Tibial artery (tissue), 4 donors: ENCODE measurements at regions of chr3 and their contacts with region 1.

Region 1: DNA sequence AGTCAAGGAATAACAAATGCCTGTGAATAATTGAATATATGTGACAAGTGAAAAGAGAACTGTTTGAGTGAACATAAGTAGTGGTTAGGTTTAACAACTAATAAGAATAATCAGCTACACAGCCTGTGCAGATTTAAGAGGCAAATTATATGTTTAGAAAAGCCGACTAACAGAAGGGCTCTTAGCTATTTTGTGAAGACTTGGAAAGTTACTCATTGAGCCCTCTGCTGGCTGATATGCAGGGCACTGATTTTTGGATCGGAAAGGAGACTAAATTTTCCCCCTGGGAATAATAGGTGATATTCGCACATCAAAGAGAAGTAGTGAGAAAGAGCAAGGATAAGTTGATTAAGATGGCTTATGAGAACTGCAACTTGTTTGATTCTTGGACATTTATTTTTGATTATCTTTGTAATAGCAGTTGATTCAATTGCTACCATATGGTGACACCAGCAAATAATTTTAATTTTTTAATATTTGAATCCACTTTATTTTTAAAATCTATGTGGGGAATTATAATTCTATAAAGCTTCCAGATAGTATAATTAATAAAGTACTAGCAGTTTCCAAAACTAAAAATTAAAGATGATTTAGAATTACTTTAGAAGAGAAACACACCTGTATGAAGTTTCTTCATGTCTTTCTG is 156.2 kb downstream of the NLGN1 start:
- DNase-seq: no peak
- H3K4me3 ChIP-seq: no peak overlapping the region
- H3K27ac ChIP-seq: peak overlapping the region in 1 of 2 donors; percentile 4
- H3K4me1 ChIP-seq: peaks cover 0 to 11% (median 0%) of the 10 kb centered on the region in 4 donors
- H3K27me3 ChIP-seq: no peaks in the 10 kb centered on the region
- CTCF ChIP-seq: peak; percentile 69 to 77

Region 2: GRCh38 chr3:173371848-173372487 is 181.8 kb before region 1 on chr3:
- intact Hi-C with region 1: loop called (anchors 5 kb)
- DNase-seq: peak in 1 of 2 donors; percentile 34
- H3K4me3 ChIP-seq: no peak overlapping the region
- H3K27ac ChIP-seq: no peak overlapping the region
- H3K4me1 ChIP-seq: no peaks in the 10 kb centered on the region
- H3K27me3 ChIP-seq: no peaks in the 10 kb centered on the region
- CTCF ChIP-seq: peak; percentile 55 to 58